ENCODE measurements at regions of chr2 and their contacts with region 1.

Region 1: GRCh38 chr2:173402405-173402974 is 47.8 kb downstream of the CDCA7 start:
- DNase-seq: peak; percentile 78
- ATAC-seq: peak; percentile 99
- H3K4me3 ChIP-seq: no peak overlapping the region; a peak in 1 of 6 replicates
- H3K27ac ChIP-seq: no peak overlapping the region
- H3K4me1 ChIP-seq: peaks cover 14% of the 10 kb centered on the region
- H3K27me3 ChIP-seq: peaks cover 2 to 35% of the 10 kb centered on the region in 2 experiments; a peak in 3 of 5 replicates
- CTCF ChIP-seq: peak; percentile 98
- EP300 ChIP-seq: no peak
- POLR2A ChIP-seq: no peak
- RAD21 ChIP-seq: peak; percentile 94

Region 2: DNA sequence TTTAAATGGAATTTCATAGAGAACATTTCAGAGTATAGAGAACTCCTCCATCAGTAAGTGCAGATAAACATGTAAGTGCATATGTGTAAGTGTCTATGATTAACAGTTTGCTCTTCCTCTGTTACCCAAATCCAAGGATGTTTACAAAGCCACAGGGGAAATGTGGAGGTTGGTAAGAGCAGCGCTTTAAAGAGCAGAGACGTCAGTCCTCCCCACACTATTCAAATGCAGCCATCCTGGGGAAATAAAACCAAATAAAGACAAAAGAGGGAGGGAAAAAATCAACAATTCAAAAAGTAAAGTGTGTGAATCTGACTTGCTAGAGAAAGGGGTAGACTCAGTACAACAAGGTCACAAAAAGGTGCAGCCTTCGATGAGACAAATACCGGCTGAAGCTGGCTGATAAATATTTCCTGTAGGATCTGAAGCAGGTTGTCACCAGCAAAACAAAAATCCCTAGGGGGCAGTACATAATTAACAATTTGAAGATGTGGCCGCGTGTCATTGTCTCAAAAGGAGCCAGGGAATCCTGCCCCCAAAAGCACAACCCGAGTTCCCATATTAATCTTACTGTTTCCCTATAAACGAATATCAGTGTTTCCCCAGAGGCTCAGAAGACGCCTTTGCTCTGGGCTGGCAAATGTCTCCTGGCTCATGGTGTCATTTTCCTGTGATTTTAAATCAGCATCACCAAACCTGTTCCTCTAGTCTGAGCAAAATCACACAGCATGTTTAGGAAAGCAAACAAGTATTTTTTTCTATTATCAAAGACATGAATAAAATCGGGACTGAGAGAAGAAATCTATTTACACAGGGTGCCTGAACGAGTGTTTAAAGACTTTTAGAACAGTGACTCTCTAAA is 168.8 kb after region 1 on chr2:
- CTCF ChIA-PET with region 1: no interaction called
- POLR2A ChIA-PET with region 1: no interaction called
- in situ Hi-C with region 1: no loop called
- intact Hi-C with region 1: loop called (anchors 2 kb)
- DNase-seq: peak; percentile 26
- ATAC-seq: peak; percentile 65
- H3K4me3 ChIP-seq: no peak overlapping the region
- H3K27ac ChIP-seq: no peak overlapping the region
- H3K4me1 ChIP-seq: no peaks in the 10 kb centered on the region
- H3K27me3 ChIP-seq: peaks cover 0 to 14% of the 10 kb centered on the region in 2 experiments; a peak in 2 of 5 replicates
- CTCF ChIP-seq: peak; percentile 47
- EP300 ChIP-seq: no peak
- POLR2A ChIP-seq: no peak
- RAD21 ChIP-seq: no peak

Region 3: GRCh38 chr2:173749315-173749714 is 346.8 kb after region 1 on chr2:
- CTCF ChIA-PET with region 1: interaction called, 8 read pairs
- POLR2A ChIA-PET with region 1: no interaction called
- in situ Hi-C with region 1: loop called (anchors 10 kb)
- intact Hi-C with region 1: no loop called
- DNase-seq: peak; percentile 23
- ATAC-seq: peak; percentile 50; the same call in 2 of the 3 replicates
- H3K4me3 ChIP-seq: no peak overlapping the region
- H3K27ac ChIP-seq: no peak overlapping the region
- H3K4me1 ChIP-seq: peaks cover 8% of the 10 kb centered on the region; the same call in 1 of the 2 replicates
- H3K27me3 ChIP-seq: peaks cover 0 to 18% of the 10 kb centered on the region in 2 experiments; a peak in 2 of 5 replicates
- CTCF ChIP-seq: 0 out of 2 replicates have a peak, but pooled peaks have one; percentile 36
- EP300 ChIP-seq: no peak
- POLR2A ChIP-seq: no peak
- RAD21 ChIP-seq: 0 out of 2 replicates have a peak, but pooled peaks have one; percentile 29

Region 4: DNA sequence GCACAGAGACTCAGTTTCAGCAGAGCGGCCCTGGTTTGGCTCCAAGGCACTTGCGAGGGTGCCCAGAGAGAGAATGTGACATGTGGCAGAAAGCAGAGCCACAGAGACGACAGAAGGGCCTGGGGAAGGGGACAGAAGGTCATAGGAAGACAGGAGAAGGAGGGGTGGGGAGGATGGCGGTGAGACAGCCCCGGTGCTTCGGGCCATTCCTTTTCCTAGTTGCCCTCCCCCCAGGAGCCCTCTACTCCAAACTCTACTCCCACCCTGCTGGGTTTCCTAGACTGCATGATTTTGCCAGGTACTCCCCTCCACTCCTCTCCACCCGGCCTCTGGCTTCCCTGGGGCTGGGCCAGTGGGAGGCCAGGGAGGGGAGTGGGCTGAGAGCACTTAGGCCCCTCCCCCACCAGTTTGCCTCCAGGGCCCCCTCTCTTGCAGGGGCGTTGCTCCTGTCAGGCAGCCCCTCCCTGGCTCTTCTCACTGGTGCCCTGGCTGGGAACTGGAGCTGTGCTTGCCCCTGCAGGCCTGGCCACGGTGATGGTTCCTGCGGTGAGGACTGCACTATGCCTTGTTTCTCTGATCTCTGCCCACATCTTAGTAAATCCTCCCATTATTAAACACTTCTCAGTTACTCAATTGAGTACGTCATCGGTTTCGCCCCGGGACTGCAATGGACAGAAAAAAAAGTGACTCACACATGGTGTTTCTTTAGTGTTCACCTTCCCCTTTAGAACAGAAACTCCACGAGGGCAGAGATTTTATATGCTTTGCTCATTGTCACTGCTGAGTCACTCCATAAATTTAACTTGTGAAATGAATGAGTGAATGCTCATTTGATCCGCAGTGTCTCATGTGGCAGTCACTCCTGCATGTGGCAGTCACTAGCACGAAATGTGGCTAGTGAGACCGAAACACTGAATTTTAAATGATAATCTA is 621.4 kb after region 1 on chr2:
- CTCF ChIA-PET with region 1: no interaction called
- POLR2A ChIA-PET with region 1: no interaction called
- in situ Hi-C with region 1: loop called (anchors 25 kb)
- intact Hi-C with region 1: no loop called
- DNase-seq: peak; percentile 78
- ATAC-seq: peak; percentile 75
- H3K4me3 ChIP-seq: peak overlapping the region; percentile 32 to 70 (median 39)
- H3K27ac ChIP-seq: no peak overlapping the region
- H3K4me1 ChIP-seq: peaks cover 36% of the 10 kb centered on the region
- H3K27me3 ChIP-seq: peaks cover 0 to under 1% of the 10 kb centered on the region in 2 experiments; a peak in 1 of 5 replicates
- CTCF ChIP-seq: no peak
- EP300 ChIP-seq: no peak
- POLR2A ChIP-seq: no peak
- RAD21 ChIP-seq: no peak

Region 5: DNA sequence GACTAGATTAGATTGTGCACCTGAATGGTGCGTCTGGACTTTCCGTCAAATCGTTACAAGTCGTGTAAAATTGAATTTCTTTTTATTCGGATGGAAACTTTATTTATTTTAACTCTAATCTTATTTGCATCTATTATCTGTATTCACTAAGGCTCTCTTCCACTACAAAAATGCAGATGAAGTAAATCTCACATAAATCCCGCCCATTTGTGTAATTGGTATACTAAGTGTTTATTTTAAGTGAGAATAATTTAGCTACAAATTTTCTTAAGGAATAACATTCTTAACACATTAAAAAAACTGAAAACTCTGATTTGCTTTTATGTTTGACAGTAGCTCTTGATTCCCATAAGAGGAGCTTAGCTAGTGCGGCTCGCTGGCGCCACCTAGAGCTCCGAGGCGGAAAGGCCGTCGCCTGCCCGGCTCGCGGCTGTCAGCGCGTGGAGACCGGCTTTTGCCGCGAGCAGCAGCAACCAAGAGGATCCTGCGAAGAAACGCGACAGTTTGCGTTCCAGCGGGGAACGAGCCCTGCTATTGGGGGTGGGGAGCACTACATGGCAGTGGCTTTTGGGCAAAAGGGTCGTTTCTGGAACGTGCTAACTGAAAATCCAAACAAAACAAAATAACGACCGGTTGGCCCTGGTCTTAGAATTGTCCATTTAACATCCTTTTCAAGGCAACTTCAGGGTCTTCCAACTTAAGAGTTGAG is 939.0 kb after region 1 on chr2:
- CTCF ChIA-PET with region 1: interaction called, 4 read pairs
- POLR2A ChIA-PET with region 1: no interaction called
- in situ Hi-C with region 1: loop called (anchors 5 kb)
- intact Hi-C with region 1: loop called (anchors 1 kb)
- DNase-seq: peak; percentile 67
- ATAC-seq: peak; percentile 68
- H3K4me3 ChIP-seq: peak overlapping the region; percentile 48 to 70 (median 59)
- H3K27ac ChIP-seq: no peak overlapping the region
- H3K4me1 ChIP-seq: peaks cover 55% of the 10 kb centered on the region
- H3K27me3 ChIP-seq: peaks cover 21 to 74% of the 10 kb centered on the region in 2 experiments; a peak in 4 of 5 replicates
- CTCF ChIP-seq: peak; percentile 96
- EP300 ChIP-seq: no peak
- POLR2A ChIP-seq: no peak
- RAD21 ChIP-seq: peak; percentile 91

Measured in HepG2 (cell line).